Activated CD4-positive, alpha-beta T cell treated with anti-CD3 and anti-CD28 coated beads for 36 hours (primary cell): ENCODE measurements at regions of chr13 and their contacts with region 1.

Region 1: GRCh38 chr13:30306762-30307193 is 573 bp downstream of the KATNAL1 start:
- DNase-seq: peak; percentile 95
- ATAC-seq: peak; percentile 91
- H3K4me3 Mint-ChIP-seq: peak overlapping the region; percentile 80
- H3K27ac Mint-ChIP-seq: peak overlapping the region; percentile 79
- H3K4me1 Mint-ChIP-seq: peaks cover 31% of the 10 kb centered on the region
- H3K27me3 Mint-ChIP-seq: no peaks in the 10 kb centered on the region

Region 2: GRCh38 chr13:29595380-29596063 is 711.3 kb before region 1 on chr13 and contains the start of gene SLC7A1:
- CTCF ChIA-PET with region 1: no interaction called
- POLR2A ChIA-PET with region 1: no interaction called
- intact Hi-C with region 1: loop called in 1 of 2 experiments (anchors 1 kb)
- DNase-seq: peak; percentile 92
- ATAC-seq: peak; percentile 88
- H3K4me3 Mint-ChIP-seq: peak within 1 kb of the TSS; percentile 90
- H3K27ac Mint-ChIP-seq: peak within 1 kb of the TSS; percentile 95
- H3K4me1 Mint-ChIP-seq: peaks cover 36% of the 10 kb centered on the region
- H3K27me3 Mint-ChIP-seq: no peaks in the 10 kb centered on the region
- total RNA-seq, gene SLC7A1: 91.1 to 126 TPM

Region 3: DNA sequence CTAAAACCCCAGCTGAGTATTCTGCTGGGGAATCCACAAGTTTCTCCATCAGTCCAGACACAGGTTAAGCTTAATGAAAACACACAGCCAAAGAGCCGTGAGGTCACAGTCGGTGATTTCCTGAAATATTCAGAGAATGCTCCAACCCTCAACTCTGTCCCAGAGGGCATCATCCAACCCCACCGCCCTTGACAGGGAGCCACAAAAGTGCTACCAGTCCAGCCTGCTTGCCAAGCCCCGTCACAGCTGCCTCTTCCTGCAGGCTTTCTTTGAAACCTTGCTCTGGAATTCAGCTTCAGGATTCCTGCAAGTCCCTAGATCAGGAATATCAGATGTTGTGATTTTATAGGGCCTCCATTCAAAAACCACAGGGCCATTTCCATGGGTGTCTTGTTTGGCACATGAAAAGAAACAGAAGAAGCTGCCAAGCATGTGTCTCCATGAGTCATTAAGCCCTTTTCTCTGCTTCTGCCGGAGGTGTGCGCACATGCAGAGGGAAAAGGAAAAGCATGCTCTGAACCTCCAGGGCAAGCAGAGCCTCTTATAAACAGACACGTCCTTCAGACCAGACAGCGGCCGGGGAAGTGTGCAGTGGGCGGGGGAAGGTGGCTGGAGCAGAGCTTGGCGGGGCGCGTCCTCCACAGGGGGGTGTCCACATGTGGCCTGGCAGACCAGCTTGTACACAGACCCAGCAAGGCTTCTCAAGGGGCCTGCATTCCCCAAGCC is 164.1 kb before region 1 on chr13:
- CTCF ChIA-PET with region 1: interaction called, 3 read pairs
- POLR2A ChIA-PET with region 1: no interaction called
- intact Hi-C with region 1: loop called in 1 of 2 experiments (anchors 5 kb)
- DNase-seq: peak; percentile 66
- ATAC-seq: peak; percentile 49
- H3K4me3 Mint-ChIP-seq: no peak overlapping the region
- H3K27ac Mint-ChIP-seq: peak overlapping the region; percentile 84
- H3K4me1 Mint-ChIP-seq: peaks cover 62% of the 10 kb centered on the region
- H3K27me3 Mint-ChIP-seq: no peaks in the 10 kb centered on the region

Region 4: GRCh38 chr13:30253830-30254229 is 52.9 kb before region 1 on chr13:
- CTCF ChIA-PET with region 1: interaction called, 4 read pairs
- POLR2A ChIA-PET with region 1: no interaction called
- intact Hi-C with region 1: loop called in 1 of 2 experiments (anchors 2 kb)
- DNase-seq: no peak
- ATAC-seq: peak; percentile 53
- H3K4me3 Mint-ChIP-seq: no peak overlapping the region
- H3K27ac Mint-ChIP-seq: peak overlapping the region; percentile 14
- H3K4me1 Mint-ChIP-seq: peaks cover 22% of the 10 kb centered on the region
- H3K27me3 Mint-ChIP-seq: no peaks in the 10 kb centered on the region

Region 5: GRCh38 chr13:30673669-30674521 is 367.1 kb after region 1 on chr13:
- CTCF ChIA-PET with region 1: no interaction called
- POLR2A ChIA-PET with region 1: no interaction called
- intact Hi-C with region 1: loop called in 1 of 2 experiments (anchors 1 kb)
- DNase-seq: peak; percentile 92
- ATAC-seq: peak; percentile 97
- H3K4me3 Mint-ChIP-seq: peak overlapping the region; percentile 72
- H3K27ac Mint-ChIP-seq: peak overlapping the region; percentile 73
- H3K4me1 Mint-ChIP-seq: peaks cover 12% of the 10 kb centered on the region
- H3K27me3 Mint-ChIP-seq: no peaks in the 10 kb centered on the region